GM18951 (cell line): ENCODE measurements at regions of chr10 and their contacts with region 1.

Region 1: GRCh38 chr10:95363303-95363912 is 72.6 kb upstream of the PDLIM1 start:
- POLR2A ChIP-seq: no peak

Region 2: GRCh38 chr10:95176101-95176500 is 187.3 kb before region 1 on chr10:
- in situ Hi-C with region 1: loop called (anchors 10 kb)
- POLR2A ChIP-seq: no peak

Region 3: DNA sequence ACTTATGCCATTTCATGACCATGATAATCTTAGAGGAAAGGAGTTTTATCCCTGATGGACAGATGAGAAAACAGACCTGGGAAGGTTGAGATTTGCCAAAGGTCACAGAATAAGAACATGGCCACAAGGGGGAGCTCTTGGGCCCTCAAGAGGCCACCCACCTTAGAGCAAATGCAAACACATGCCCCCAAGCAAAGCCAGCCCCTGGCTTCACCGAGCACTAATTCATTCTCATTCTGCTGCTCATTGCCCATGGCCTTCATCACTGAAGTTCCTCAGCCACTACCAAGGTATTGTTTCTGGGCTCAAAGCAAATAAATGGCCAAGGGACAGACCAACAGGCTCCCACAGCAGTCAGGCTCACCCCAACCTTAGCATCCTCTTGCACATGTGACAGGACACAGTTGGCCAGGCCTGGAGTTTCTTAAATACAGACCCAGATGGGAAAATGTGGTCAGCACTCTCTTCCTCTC is 116.8 kb before region 1 on chr10:
- in situ Hi-C with region 1: loop called (anchors 10 kb)
- POLR2A ChIP-seq: no peak